ENCODE measurements at regions of chr1 and their contacts with region 1.

Region 1: DNA sequence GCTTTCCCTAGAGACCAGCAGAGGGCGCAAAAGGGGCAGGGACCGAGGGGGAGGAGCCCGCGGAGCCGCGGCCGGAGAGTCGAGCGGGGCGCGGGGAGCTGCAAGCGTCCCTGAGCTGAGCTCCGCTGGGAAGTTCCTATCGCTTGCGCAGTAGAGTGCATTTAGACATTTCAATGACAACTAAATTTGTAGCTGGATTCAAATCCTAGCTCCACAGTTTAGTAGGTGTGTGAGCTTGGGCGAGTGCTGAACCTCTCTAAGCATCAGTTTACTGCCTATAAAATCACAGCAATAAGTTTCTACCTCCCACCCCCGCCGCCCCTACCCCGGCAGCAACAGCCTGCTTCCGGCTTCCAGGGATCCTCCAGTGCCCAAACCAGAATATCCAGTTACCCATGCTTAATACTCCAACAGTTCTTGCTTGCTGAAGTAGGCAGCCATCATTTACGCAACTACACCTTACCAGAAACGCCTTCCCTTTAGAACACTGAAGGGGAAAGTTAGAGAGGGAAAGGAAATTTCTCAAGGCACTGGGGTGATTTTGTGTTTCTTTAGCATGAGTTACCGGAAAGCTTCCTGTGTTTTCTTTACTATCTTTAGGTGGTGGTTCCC is 9.1 kb downstream of the TLR5 start:
- DNase-seq: peak; percentile 75
- H3K4me3 Mint-ChIP-seq: no peak overlapping the region
- H3K27ac Mint-ChIP-seq: no peak overlapping the region
- H3K4me1 Mint-ChIP-seq: peaks cover 6% of the 10 kb centered on the region
- H3K27me3 Mint-ChIP-seq: peaks cover 56% of the 10 kb centered on the region

Region 2: GRCh38 chr1:222844189-222844779 is 289.6 kb before region 1 on chr1:
- CTCF ChIA-PET with region 1: no interaction called
- POLR2A ChIA-PET with region 1: no interaction called
- DNase-seq: no peak
- H3K4me3 Mint-ChIP-seq: no peak overlapping the region
- H3K27ac Mint-ChIP-seq: no peak overlapping the region
- H3K4me1 Mint-ChIP-seq: no peaks in the 10 kb centered on the region
- H3K27me3 Mint-ChIP-seq: no peaks in the 10 kb centered on the region

Region 3: GRCh38 chr1:222892137-222892769 is 241.7 kb before region 1 on chr1:
- CTCF ChIA-PET with region 1: no interaction called
- POLR2A ChIA-PET with region 1: no interaction called
- DNase-seq: no peak
- H3K4me3 Mint-ChIP-seq: no peak overlapping the region
- H3K27ac Mint-ChIP-seq: no peak overlapping the region
- H3K4me1 Mint-ChIP-seq: peaks cover 8% of the 10 kb centered on the region
- H3K27me3 Mint-ChIP-seq: no peaks in the 10 kb centered on the region

Region 4: DNA sequence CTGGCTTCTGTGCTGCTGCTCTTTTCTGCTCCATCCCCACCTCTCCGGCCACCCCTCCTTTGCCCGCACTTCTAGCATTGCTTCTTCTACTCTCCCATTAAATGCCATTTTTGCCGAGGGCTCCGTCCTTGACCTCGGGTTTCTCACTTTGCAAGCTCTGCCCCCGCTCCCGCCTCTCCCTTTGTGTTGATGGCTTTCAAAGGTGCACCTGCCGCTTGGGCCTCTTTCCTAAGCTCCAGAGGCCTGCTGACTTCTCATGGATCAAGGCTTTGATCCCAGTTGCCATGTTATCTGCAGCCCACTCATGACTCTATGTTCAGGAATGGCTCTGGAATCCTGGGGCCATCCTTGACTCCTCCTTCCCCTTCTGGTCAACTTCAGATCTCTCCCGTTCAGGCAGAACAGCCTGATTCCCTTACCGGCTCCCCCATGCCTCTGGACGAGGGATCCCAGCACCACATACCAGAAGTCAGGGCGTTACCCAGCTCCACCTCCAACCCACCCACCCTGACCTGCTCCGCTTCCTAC is 45.2 kb before region 1 on chr1:
- CTCF ChIA-PET with region 1: interaction called, 10 read pairs
- POLR2A ChIA-PET with region 1: no interaction called
- DNase-seq: no peak
- H3K4me3 Mint-ChIP-seq: no peak overlapping the region
- H3K27ac Mint-ChIP-seq: no peak overlapping the region
- H3K4me1 Mint-ChIP-seq: no peaks in the 10 kb centered on the region
- H3K27me3 Mint-ChIP-seq: no peaks in the 10 kb centered on the region

Region 5: DNA sequence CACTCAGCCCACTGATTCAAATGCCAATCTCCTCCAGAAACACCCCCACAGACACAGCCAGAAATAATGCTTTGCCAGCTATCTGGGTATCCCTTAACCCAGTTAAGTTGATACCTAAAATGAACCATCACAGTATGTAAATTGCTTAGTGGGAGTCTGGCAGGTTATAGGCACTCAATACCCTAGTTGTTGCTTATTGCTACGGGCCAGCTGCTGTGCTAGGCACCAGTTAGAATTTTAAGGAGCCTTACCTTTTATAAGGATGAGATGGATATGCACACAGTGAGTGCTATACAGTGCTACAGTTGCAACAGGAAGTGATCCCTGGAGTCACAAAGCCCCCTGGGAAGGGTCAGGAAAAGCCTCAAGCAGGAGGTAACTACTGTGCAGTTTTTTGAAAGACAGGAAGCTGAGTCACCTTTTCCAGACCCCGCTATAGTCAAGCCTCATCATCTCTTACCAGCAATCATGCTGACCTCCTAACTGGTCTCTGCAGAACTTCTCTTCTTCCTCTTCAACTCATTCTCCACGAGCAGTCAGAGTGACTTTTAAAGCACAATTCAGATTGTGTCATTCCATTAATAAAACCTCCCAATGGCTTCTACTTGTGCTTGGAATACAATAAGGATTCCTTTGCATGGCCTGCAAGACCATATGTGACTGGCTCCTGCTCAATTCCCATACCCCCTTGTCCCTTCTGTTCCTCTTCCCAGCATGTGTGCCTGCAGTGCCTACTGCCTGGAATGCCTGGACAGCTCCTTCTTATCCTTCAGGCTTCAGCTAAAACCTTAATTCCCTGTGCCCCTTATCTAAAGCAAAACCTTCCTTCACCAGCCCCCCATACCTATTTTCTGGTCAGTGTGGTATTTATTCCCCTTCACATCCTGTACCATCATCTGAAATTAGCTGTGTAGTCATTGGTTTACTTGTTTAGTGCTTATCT is 19.5 kb after region 1 on chr1:
- CTCF ChIA-PET with region 1: interaction called, 18 read pairs
- POLR2A ChIA-PET with region 1: no interaction called
- DNase-seq: no peak
- H3K4me3 Mint-ChIP-seq: no peak overlapping the region
- H3K27ac Mint-ChIP-seq: no peak overlapping the region
- H3K4me1 Mint-ChIP-seq: peaks cover 8% of the 10 kb centered on the region
- H3K27me3 Mint-ChIP-seq: no peaks in the 10 kb centered on the region

Region 6: GRCh38 chr1:223200903-223201302 is 67.0 kb after region 1 on chr1:
- CTCF ChIA-PET with region 1: no interaction called
- POLR2A ChIA-PET with region 1: no interaction called
- DNase-seq: no peak
- H3K4me3 Mint-ChIP-seq: no peak overlapping the region
- H3K27ac Mint-ChIP-seq: no peak overlapping the region
- H3K4me1 Mint-ChIP-seq: no peaks in the 10 kb centered on the region
- H3K27me3 Mint-ChIP-seq: peaks cover 14% of the 10 kb centered on the region

Region 7: GRCh38 chr1:223244366-223245103 is 110.6 kb after region 1 on chr1:
- CTCF ChIA-PET with region 1: interaction called, 12 read pairs
- POLR2A ChIA-PET with region 1: no interaction called
- DNase-seq: no peak
- H3K4me3 Mint-ChIP-seq: no peak overlapping the region
- H3K27ac Mint-ChIP-seq: no peak overlapping the region
- H3K4me1 Mint-ChIP-seq: peaks cover 30% of the 10 kb centered on the region
- H3K27me3 Mint-ChIP-seq: no peaks in the 10 kb centered on the region

Region 8: DNA sequence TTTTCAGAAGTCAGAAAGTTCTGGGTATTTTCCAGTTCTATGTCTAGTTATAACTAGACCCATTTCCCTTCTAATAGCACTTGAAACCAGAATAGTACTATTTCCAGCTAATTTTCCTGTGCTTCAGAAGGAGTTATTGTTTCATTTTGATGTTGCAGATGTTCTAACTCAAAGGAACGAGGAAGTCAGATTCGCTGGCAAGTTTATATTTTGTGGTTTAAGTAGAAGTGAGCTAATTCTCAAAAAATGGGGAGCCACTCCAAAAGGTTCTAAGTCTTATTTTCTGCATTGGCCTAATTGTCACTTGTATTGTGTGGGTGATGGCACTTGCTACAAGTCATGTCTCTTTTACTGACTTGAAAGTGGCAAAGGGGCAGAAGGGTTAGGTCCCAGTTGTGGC is 277.4 kb after region 1 on chr1:
- CTCF ChIA-PET with region 1: no interaction called
- POLR2A ChIA-PET with region 1: no interaction called
- DNase-seq: no peak
- H3K4me3 Mint-ChIP-seq: no peak overlapping the region
- H3K27ac Mint-ChIP-seq: no peak overlapping the region
- H3K4me1 Mint-ChIP-seq: no peaks in the 10 kb centered on the region
- H3K27me3 Mint-ChIP-seq: peaks cover 6% of the 10 kb centered on the region

Region 9: GRCh38 chr1:223683586-223684487 is 549.9 kb after region 1 on chr1:
- CTCF ChIA-PET with region 1: interaction called, 20 read pairs
- POLR2A ChIA-PET with region 1: no interaction called
- DNase-seq: peak; percentile 48
- H3K4me3 Mint-ChIP-seq: no peak overlapping the region
- H3K27ac Mint-ChIP-seq: no peak overlapping the region
- H3K4me1 Mint-ChIP-seq: peaks cover under 1% of the 10 kb centered on the region
- H3K27me3 Mint-ChIP-seq: peaks cover 25% of the 10 kb centered on the region

Measured in activated CD4-positive, alpha-beta memory T cell treated with anti-CD3 and anti-CD28 coated beads, Interleukin-2, amount 10 ng/mL, durations not matched to agents 7 days and 5 days (primary cell).